ENCODE measurements at regions of chr4 and their contacts with region 1.

Region 1: GRCh38 chr4:122602277-122603142 is 18.4 kb downstream of the IL21 start:
- DNase-seq: no peak
- ATAC-seq: peak; percentile 79 to 83
- H3K4me3 ChIP-seq: no peak overlapping the region
- H3K27ac ChIP-seq: no peak overlapping the region
- H3K4me1 ChIP-seq: no peaks in the 10 kb centered on the region
- H3K27me3 ChIP-seq: no peaks in the 10 kb centered on the region
- CTCF ChIP-seq: peak in 4 of 5 experiments; percentile 9 to 52 (median 42)
- POLR2A ChIP-seq: no peak

Region 2: DNA sequence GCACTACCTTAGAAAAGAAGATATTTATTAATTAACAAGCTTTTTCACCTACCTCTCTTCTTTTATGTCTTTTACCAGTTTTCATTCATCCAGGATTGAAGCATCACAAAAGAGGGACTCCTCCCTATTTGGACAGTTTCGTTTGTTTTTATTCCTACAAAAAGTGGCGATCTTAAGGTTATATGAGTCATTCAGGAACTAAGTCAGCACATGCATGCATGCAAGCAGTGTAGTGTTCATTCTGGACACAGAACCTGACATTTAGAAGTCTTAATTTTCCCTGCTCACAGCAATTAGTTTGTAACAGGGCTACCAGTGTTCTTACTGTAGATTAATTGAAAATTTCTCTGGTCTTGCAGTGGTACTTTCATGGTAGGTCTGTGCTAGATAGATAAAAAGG is 1173.8 kb before region 1 on chr4:
- in situ Hi-C with region 1: no loop called
- intact Hi-C with region 1: no loop called
- DNase-seq: no peak
- ATAC-seq: no peak
- H3K4me3 ChIP-seq: no peak overlapping the region
- H3K27ac ChIP-seq: no peak overlapping the region
- H3K4me1 ChIP-seq: no peaks in the 10 kb centered on the region
- H3K27me3 ChIP-seq: no peaks in the 10 kb centered on the region
- CTCF ChIP-seq: no peak
- POLR2A ChIP-seq: no peak

Region 3: GRCh38 chr4:122500852-122501501 is 101.5 kb before region 1 on chr4:
- in situ Hi-C with region 1: no loop called
- intact Hi-C with region 1: no loop called
- DNase-seq: no peak
- ATAC-seq: no peak
- H3K4me3 ChIP-seq: no peak overlapping the region
- H3K27ac ChIP-seq: no peak overlapping the region
- H3K4me1 ChIP-seq: no peaks in the 10 kb centered on the region
- H3K27me3 ChIP-seq: no peaks in the 10 kb centered on the region
- CTCF ChIP-seq: no peak
- POLR2A ChIP-seq: no peak

Region 4: DNA sequence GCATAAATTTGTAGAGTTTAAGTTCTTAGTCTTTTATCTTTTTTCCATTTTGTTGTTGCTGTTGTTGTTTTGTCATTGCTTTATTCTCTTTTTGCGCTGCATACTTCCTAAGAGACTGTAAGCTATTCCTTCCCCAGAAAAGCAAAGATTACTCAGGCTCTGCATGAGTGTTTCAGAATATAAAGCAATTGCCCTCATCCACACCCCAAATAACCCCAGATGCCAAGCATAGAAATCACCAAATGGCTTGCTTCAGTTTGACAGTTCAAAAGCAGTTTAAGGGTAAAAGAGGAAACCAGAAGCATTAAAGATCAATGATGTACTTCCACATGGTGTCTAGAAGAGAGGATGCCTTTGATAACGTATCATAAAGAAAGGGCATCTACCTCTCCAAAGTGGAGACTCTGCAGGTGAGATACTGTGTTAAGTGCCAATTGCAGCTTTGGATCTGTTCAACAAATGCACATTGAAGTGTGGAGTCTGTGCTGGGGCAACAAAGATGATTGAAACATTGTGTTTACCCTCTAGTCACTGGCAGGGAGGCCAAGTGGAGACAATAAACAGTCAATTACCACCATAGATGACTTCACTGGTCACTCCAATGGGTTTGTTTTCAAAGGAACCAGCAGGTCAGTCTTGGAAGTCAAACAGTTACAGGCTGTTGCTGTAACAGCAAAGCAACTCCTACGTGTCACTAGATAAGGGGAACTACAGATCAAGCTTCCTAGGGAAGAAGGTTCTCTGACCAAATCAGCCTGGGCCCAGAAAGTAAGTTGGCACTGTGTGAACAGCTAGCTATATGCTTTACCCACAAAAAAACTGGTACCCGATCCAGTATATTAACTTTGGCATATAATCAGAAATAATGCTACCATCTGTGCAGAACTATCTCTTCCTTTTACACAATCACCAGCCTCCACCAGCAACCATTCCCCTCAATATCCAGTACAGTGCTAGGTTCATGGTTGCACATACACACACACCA is 59.0 kb after region 1 on chr4:
- in situ Hi-C with region 1: no loop called
- intact Hi-C with region 1: loop called (anchors 5 kb)
- DNase-seq: no peak
- ATAC-seq: no peak
- H3K4me3 ChIP-seq: no peak overlapping the region
- H3K27ac ChIP-seq: peak overlapping the region in 2 of 4 donors; percentile 2 to 15
- H3K4me1 ChIP-seq: peaks cover 12 to 13% of the 10 kb centered on the region in 2 donors
- H3K27me3 ChIP-seq: no peaks in the 10 kb centered on the region
- CTCF ChIP-seq: no peak
- POLR2A ChIP-seq: no peak

Region 5: GRCh38 chr4:122716825-122717448 is 114.4 kb after region 1 on chr4:
- in situ Hi-C with region 1: loop called in 3 of 4 experiments (anchors 5 to 10 kb)
- intact Hi-C with region 1: loop called (anchors 1 kb)
- DNase-seq: peak; percentile 18 to 45
- ATAC-seq: peak; percentile 68 to 82
- H3K4me3 ChIP-seq: no peak overlapping the region
- H3K27ac ChIP-seq: no peak overlapping the region
- H3K4me1 ChIP-seq: no peaks in the 10 kb centered on the region
- H3K27me3 ChIP-seq: no peaks in the 10 kb centered on the region
- CTCF ChIP-seq: peak; percentile 55 to 80 (median 59)
- POLR2A ChIP-seq: no peak

Region 6: DNA sequence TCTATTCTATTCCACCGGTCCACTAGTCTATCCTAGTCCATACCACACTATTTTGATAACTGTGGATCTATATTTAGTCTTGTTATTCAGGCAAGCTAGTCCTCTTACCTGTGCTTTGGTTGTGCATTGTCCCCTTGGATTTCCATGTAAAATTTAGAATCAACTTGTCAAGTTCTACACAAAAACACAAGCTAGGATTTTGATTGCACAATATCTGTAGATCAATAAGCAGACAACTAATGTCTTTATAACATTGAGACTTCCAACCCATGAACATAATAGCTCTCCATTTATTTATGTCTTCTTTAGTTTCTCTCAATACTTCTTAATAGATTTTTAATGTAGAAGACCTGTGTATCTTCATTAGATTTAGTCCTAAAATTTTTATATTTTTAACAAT is 119.7 kb after region 1 on chr4:
- in situ Hi-C with region 1: loop called in 3 of 4 experiments (anchors 5 to 10 kb)
- intact Hi-C with region 1: loop called (anchors 1 kb)
- DNase-seq: no peak
- ATAC-seq: no peak
- H3K4me3 ChIP-seq: no peak overlapping the region
- H3K27ac ChIP-seq: no peak overlapping the region
- H3K4me1 ChIP-seq: no peaks in the 10 kb centered on the region
- H3K27me3 ChIP-seq: no peaks in the 10 kb centered on the region
- CTCF ChIP-seq: no peak
- POLR2A ChIP-seq: no peak

Measured in gastrocnemius medialis (tissue), 4 donors.